Dorsolateral prefrontal cortex (tissue), 120 donors: ENCODE measurements at regions of chr17 and their contacts with region 1.

Region 1: DNA sequence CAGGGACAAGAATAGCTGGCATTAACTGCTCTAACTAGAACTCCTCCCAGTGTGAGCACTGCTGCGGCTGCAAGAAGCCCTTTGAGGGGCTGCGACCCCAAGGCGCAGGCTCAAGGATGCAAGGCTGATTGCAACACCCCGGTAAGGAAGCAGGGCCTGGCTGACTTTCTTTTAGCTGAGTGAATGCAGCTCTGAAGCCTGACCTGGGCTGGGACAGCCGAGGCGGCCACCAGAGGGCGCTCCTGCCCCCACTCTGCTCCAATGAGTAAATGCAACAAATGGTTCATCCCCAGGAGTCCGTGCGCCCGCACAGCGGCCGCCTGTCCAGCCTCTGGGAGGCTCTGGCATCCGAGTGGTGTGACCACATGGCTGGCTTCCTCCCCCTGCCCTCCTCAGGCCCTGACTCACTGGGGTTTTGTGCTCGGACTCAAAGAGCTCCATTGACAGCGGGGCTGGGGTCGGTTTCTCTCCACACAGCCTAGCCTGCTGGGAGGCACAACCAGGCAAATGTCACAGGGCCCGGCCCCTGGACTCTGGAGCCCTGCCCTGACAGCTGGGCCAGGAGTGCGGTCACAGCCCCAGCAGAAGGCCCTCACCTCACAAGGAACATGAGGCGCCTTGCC is at the start of gene SMIM5:
- DNase-seq: peak; percentile 94 to 99 (median 96)
- H3K4me3 ChIP-seq: peak within 1 kb of the TSS; percentile 20 to 73 (median 54)
- H3K27ac ChIP-seq: peak within 1 kb of the TSS; percentile 40 to 100 (median 98)
- H3K27me3 ChIP-seq: no peaks in the 10 kb centered on the region
- CTCF ChIP-seq: peak; percentile 94 to 100 (median 98)
- total RNA-seq, gene SMIM5: 0.95 to 34.0 (median 5.6) TPM

Region 2: DNA sequence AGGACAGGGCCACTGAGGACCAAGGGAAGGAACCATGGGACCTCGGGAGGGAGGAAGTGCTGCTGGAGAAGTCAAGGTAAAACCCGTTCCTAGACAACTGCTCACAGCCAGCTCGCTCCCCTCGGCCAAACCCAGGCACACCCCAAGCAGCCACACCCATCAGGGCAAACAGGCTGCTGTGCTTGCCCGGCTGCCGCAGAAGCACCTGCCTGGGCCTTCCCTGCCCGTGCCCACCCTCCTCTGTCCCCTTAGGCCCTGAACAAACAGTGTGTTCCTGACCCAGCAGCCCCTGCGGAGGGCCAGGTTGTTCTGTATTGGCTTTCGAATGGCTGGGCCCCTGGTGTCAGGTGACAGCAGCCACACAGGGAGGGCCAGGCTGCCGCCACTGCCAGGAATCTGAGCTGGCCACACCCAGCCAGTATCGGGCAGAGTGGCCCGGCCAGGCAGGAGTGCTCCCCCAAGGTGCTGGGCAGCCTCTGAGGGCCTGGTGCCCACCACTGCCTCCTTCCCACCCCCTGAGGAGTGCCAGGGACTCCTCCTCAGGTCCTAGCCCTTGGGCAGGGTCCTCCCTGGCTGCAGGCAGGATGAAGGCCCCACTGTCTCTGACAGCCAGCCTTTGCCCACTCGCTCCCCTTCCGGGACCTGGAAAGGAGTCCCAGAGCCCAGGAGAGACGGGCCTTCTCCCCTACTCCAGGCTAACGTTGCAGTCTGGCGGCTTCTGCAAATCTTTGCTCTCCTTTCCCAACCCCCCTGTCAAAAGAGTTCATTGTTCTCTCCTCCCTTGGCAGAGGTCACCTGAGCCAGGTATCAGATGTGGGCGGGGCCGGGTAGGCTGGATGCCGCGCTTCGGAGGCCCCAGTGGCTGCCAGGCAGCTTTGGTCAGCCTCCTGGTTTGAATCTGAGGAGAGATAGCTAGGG is 83.5 kb before region 1 on chr17:
- intact Hi-C with region 1: no loop called
- DNase-seq: no peak
- H3K4me3 ChIP-seq: no peak overlapping the region
- H3K27ac ChIP-seq: no peak overlapping the region
- H3K27me3 ChIP-seq: no peaks in the 10 kb centered on the region
- CTCF ChIP-seq: no peak

Region 3: GRCh38 chr17:75645889-75646637 is 13.1 kb after region 1 on chr17:
- intact Hi-C with region 1: loop called in 1 of 2 experiments (anchors 1 kb)
- DNase-seq: peak in 9 of 10 donors; percentile 71 to 91 (median 87)
- H3K4me3 ChIP-seq: peak overlapping the region in 19 of 59 donors; percentile 4 to 49 (median 23)
- H3K27ac ChIP-seq: peak overlapping the region; percentile 77 to 100 (median 97)
- H3K27me3 ChIP-seq: no peaks in the 10 kb centered on the region
- CTCF ChIP-seq: peak in 17 of 56 donors; percentile 11 to 51 (median 22)

Region 4: GRCh38 chr17:75654176-75654575 is 21.2 kb after region 1 on chr17:
- intact Hi-C with region 1: loop called in 1 of 2 experiments (anchors 1 kb)
- DNase-seq: peak in 1 of 10 donors; percentile 67
- H3K4me3 ChIP-seq: no peak overlapping the region
- H3K27ac ChIP-seq: peak overlapping the region in 57 of 59 donors; percentile 48 to 100 (median 82)
- H3K27me3 ChIP-seq: no peaks in the 10 kb centered on the region
- CTCF ChIP-seq: peak; percentile 22 to 81 (median 54)